ENCODE measurements at regions of chr7 and their contacts with region 1.

Region 1: GRCh38 chr7:7554021-7554432 is 12.7 kb upstream of the MIOS start:
- DNase-seq: peak; percentile 86
- H3K4me3 Mint-ChIP-seq: peak overlapping the region; percentile 58
- H3K27ac Mint-ChIP-seq: peak overlapping the region; percentile 98
- H3K4me1 Mint-ChIP-seq: peaks cover 44% of the 10 kb centered on the region
- H3K27me3 Mint-ChIP-seq: no peaks in the 10 kb centered on the region
- CTCF ChIP-seq: no peak

Region 2: GRCh38 chr7:7438851-7439250 is 115.2 kb before region 1 on chr7:
- CTCF ChIA-PET with region 1: no interaction called
- POLR2A ChIA-PET with region 1: interaction called, 10 read pairs
- intact Hi-C with region 1: no loop called
- DNase-seq: peak; percentile 95
- H3K4me3 Mint-ChIP-seq: peak overlapping the region; percentile 36
- H3K27ac Mint-ChIP-seq: peak overlapping the region; percentile 88
- H3K4me1 Mint-ChIP-seq: peaks cover 13% of the 10 kb centered on the region
- H3K27me3 Mint-ChIP-seq: no peaks in the 10 kb centered on the region
- CTCF ChIP-seq: no peak

Region 3: DNA sequence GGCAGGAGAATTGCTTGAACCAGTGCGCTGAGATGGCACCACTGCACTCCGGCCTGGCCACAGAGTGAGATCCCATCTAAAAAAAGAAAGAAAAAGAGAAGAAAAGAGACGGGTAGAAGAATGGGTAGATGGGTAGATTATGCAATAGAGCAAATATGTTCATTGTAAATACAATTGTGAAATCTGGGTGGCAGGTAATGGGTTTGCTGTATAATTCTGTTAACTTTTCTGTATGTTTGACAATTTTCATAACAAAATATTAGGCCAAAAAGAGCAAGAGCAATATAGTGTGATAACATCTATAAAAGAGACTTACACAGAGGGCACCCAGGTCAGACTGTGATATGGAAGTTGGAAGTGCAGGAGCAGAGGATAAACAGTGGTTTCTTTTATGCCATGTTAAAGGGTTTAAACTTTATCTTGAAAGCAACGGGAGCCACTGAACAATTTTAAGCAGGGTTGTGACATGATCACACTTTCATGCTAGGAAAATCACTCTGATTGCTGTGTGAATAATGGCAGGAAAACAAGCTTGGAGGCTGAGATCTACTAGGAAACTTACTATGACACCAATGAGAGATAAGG is 11.7 kb before region 1 on chr7:
- CTCF ChIA-PET with region 1: interaction called, 21 read pairs
- POLR2A ChIA-PET with region 1: interaction called, 4 read pairs
- intact Hi-C with region 1: no loop called
- DNase-seq: no peak
- H3K4me3 Mint-ChIP-seq: no peak overlapping the region
- H3K27ac Mint-ChIP-seq: peak overlapping the region; percentile 62
- H3K4me1 Mint-ChIP-seq: peaks cover 18% of the 10 kb centered on the region
- H3K27me3 Mint-ChIP-seq: no peaks in the 10 kb centered on the region
- CTCF ChIP-seq: no peak

Measured in MCF 10A (cell line).